Panc1 (cell line): ENCODE measurements at regions of chr14 and their contacts with region 1.

Region 1: DNA sequence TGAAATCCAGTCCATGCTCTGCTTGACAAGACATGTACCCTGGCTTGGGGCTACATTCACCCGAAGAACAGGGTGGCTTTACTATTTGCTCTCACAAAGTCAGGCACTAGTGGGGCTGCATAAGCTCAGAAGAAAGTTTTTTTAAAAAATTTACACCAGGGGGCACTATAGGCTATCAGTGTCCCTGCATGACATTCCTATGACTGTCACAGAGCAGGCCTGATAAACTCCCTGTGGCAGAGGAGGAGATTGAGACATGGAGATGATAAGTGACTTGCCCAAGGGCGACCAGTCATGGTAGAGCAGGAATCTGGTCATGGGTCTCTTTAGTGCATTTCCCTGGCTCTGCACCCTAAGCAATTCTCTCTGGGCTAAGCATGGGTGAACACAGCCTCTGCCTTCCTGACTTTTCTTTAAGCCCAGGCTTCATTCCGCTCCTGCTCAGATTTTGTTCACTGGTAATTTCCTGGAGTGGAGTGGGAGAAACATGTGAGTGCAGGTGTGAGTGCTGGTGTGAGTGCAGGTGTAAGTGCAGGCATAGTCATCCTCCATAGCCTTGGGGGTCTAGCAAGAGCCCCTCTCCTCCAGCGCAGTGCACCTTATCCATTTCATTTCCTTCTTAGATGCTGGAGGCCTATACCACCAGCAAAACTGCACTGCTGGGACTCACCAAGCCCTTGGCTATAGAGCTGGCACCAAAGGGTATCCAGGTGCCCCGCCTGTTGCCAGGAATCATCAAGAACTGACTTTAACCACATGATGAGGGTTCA is 91.6 kb downstream of the DHRS2 start:
- DNase-seq: no peak
- ATAC-seq: peak; percentile 96
- H3K4me3 ChIP-seq: no peak overlapping the region
- H3K27ac ChIP-seq: peak overlapping the region; percentile 29; the same call in 1 of the 2 replicates
- H3K4me1 ChIP-seq: peaks cover 3% of the 10 kb centered on the region; the same call in 1 of the 2 replicates
- H3K27me3 ChIP-seq: no peaks in the 10 kb centered on the region
- CTCF ChIP-seq: peak; percentile 65

Region 2: GRCh38 chr14:23708343-23708742 is 19.4 kb before region 1 on chr14:
- CTCF ChIA-PET with region 1: no interaction called
- POLR2A ChIA-PET with region 1: interaction called, 12 read pairs
- in situ Hi-C with region 1: no loop called
- intact Hi-C with region 1: no loop called
- DNase-seq: no peak
- ATAC-seq: no peak
- H3K4me3 ChIP-seq: no peak overlapping the region
- H3K27ac ChIP-seq: no peak overlapping the region
- H3K4me1 ChIP-seq: no peaks in the 10 kb centered on the region
- H3K27me3 ChIP-seq: no peaks in the 10 kb centered on the region; the same call in none of the 2 replicates
- CTCF ChIP-seq: no peak

Region 3: GRCh38 chr14:23953464-23954278 is 225.9 kb after region 1 on chr14 and contains the start of gene DHRS4:
- CTCF ChIA-PET with region 1: no interaction called
- POLR2A ChIA-PET with region 1: no interaction called
- in situ Hi-C with region 1: no loop called
- intact Hi-C with region 1: loop called (anchors 5 kb)
- DNase-seq: peak; percentile 38
- ATAC-seq: peak; percentile 99
- H3K4me3 ChIP-seq: peak within 1 kb of the TSS; percentile 68 to 69
- H3K27ac ChIP-seq: peak within 1 kb of the TSS; percentile 75
- H3K4me1 ChIP-seq: no peaks in the 10 kb centered on the region
- H3K27me3 ChIP-seq: no peaks in the 10 kb centered on the region
- CTCF ChIP-seq: peak; percentile 89
- total RNA-seq, gene DHRS4: 13.5 TPM

Region 4: GRCh38 chr14:24513009-24513408 is 785.3 kb after region 1 on chr14:
- CTCF ChIA-PET with region 1: no interaction called
- POLR2A ChIA-PET with region 1: no interaction called
- in situ Hi-C with region 1: no loop called
- intact Hi-C with region 1: no loop called
- DNase-seq: no peak
- ATAC-seq: no peak
- H3K4me3 ChIP-seq: no peak overlapping the region
- H3K27ac ChIP-seq: no peak overlapping the region
- H3K4me1 ChIP-seq: no peaks in the 10 kb centered on the region
- H3K27me3 ChIP-seq: no peaks in the 10 kb centered on the region
- CTCF ChIP-seq: no peak